ENCODE measurements at regions of chr6 and their contacts with region 1.

Region 1: DNA sequence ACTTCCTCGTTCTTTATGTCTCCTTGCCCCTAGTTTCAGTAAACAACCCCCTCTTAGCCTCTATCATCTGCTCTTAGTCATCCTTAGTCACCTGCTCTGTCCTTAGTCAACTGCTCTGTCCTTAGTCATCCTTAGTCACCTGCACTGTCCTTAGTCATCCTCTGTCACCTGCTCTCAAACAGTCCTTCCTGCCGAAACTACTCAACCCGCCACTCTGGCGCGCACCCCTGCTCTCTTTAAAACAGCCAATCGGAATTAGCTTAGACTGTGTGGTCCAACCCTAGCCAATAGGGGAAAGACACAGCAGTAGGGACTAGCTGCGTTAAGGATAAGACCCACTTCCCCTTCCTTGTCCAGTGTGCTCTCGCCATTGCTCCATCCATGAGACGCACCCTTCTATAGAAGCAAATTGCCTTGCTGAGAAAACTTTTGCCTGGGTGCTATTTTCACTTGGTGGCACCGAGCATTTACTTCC is 73.9 kb downstream of the BACH2 start:
- DNase-seq: no peak

Region 2: GRCh38 chr6:90369024-90369519 is 146.3 kb after region 1 on chr6:
- intact Hi-C with region 1: loop called (anchors 10 kb)
- DNase-seq: no peak

Measured in cardiac septum (tissue), 1 donor.